ENCODE measurements at regions of chr13 and their contacts with region 1.

Region 1: DNA sequence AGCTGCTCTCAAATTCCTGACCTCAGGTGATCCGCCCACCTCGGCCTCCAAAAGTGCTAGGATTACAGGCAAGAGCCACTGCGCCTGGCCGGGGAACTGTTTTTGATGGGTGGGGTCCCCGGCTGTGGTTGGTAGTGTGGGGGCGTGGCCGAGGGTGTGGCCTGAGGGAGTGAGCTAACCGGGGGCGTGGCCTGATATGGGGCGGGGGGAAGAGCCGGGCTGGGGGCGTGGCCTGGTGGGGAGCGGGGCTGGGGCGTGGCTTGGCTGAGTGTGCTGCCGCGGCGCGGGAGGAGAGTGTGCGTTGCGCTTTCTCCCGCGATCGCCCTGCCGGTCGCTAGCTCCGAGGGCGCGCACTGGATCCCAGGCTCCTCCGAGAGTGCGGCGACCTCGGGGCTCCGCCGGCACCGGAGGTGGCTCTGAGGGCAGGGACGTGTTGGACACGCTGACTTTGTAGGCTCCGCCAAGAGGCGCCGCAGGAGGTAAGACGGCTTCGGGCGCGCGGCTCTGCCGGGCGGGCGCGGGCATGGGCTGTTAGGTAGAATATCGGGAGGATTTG is at the start of gene SPATA13:
- DNase-seq: peak; percentile 96
- H3K4me3 ChIP-seq: peak within 1 kb of the TSS; percentile 66 to 94 (median 80)
- H3K27ac ChIP-seq: peak within 1 kb of the TSS; percentile 70 to 79 (median 73)
- H3K4me1 ChIP-seq: peaks cover 0 to 37% (median 29%) of the 10 kb centered on the region in 4 donors
- H3K27me3 ChIP-seq: no peaks in the 10 kb centered on the region
- CTCF ChIP-seq: no peak
- EP300 ChIP-seq: no peak
- POLR2A ChIP-seq: peak; percentile 16 to 50
- total RNA-seq, gene SPATA13: 16.1 to 29.4 (median 21.7) TPM

Region 2: GRCh38 chr13:24053519-24054251 is 106.8 kb before region 1 on chr13:
- intact Hi-C with region 1: loop called (anchors 5 kb)
- DNase-seq: no peak
- H3K4me3 ChIP-seq: no peak overlapping the region
- H3K27ac ChIP-seq: peak overlapping the region; percentile 50 to 75 (median 68)
- H3K4me1 ChIP-seq: peaks cover 0 to 42% (median 35%) of the 10 kb centered on the region in 4 donors
- H3K27me3 ChIP-seq: no peaks in the 10 kb centered on the region
- CTCF ChIP-seq: peak; percentile 10 to 68 (median 59)
- EP300 ChIP-seq: no peak
- POLR2A ChIP-seq: no peak

Region 3: GRCh38 chr13:24196593-24197197 is 36.2 kb after region 1 on chr13:
- intact Hi-C with region 1: loop called (anchors 5 kb)
- DNase-seq: no peak
- H3K4me3 ChIP-seq: no peak overlapping the region
- H3K27ac ChIP-seq: no peak overlapping the region
- H3K4me1 ChIP-seq: peaks cover 0 to 31% (median 19%) of the 10 kb centered on the region in 4 donors
- H3K27me3 ChIP-seq: no peaks in the 10 kb centered on the region
- CTCF ChIP-seq: no peak
- EP300 ChIP-seq: no peak
- POLR2A ChIP-seq: no peak

Measured in sigmoid colon (tissue), 7 donors.